ENCODE measurements at regions of chr10 and their contacts with region 1.

Region 1: GRCh38 chr10:75070961-75071428 is 40.5 kb upstream of the SAMD8 start:
- DNase-seq: no peak
- ATAC-seq: 0 out of 2 replicates have a peak, but pooled peaks have one; percentile 30
- H3K4me3 ChIP-seq: no peak overlapping the region
- H3K27ac ChIP-seq: no peak overlapping the region
- H3K4me1 ChIP-seq: no peaks in the 10 kb centered on the region
- H3K27me3 ChIP-seq: no peaks in the 10 kb centered on the region
- CTCF ChIP-seq: no peak

Region 2: GRCh38 chr10:74612195-74612594 is 458.8 kb before region 1 on chr10:
- CTCF ChIA-PET with region 1: no interaction called
- POLR2A ChIA-PET with region 1: interaction called, 22 read pairs
- in situ Hi-C with region 1: no loop called
- intact Hi-C with region 1: no loop called
- DNase-seq: no peak
- ATAC-seq: no peak
- H3K4me3 ChIP-seq: no peak overlapping the region
- H3K27ac ChIP-seq: no peak overlapping the region
- H3K4me1 ChIP-seq: no peaks in the 10 kb centered on the region
- H3K27me3 ChIP-seq: no peaks in the 10 kb centered on the region
- CTCF ChIP-seq: no peak

Measured in Panc1 (cell line).